Mammary epithelial cell (primary cell): ENCODE measurements at regions of chr5 and their contacts with region 1.

Region 1: GRCh38 chr5:129767906-129768380 is 20.0 kb downstream of the MINAR2 start:
- DNase-seq: peak; percentile 84
- H3K4me3 ChIP-seq: no peak overlapping the region
- H3K27ac ChIP-seq: no peak overlapping the region
- H3K4me1 ChIP-seq: no peaks in the 10 kb centered on the region
- H3K27me3 ChIP-seq: no peaks in the 10 kb centered on the region
- CTCF ChIP-seq: peak; percentile 96 to 99

Region 2: DNA sequence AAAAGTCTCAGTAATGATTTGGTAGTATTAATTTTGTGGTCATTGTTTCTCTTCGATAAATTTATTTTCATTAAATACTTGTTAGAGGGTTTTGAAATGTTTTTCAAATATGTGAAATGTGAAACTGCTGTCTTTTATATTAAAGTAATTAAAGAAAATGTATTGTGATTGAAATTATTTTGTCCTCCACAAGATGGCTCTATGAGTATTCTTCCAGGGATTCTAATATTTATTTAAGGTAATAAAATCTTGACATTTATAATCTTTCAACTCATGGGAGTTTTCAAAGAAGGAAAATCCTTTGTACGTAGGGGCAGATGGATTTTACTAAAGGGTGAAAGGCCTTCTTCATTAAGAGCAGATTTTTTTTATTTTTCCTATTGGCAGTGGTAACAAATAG is 654.1 kb before region 1 on chr5:
- CTCF ChIA-PET with region 1: no interaction called
- dilution Hi-C with region 1: no loop called
- in situ Hi-C with region 1: no loop called
- intact Hi-C with region 1: loop called (anchors 2 kb)
- DNase-seq: no peak
- H3K4me3 ChIP-seq: no peak overlapping the region
- H3K27ac ChIP-seq: no peak overlapping the region
- H3K4me1 ChIP-seq: peaks cover 6% of the 10 kb centered on the region
- H3K27me3 ChIP-seq: no peaks in the 10 kb centered on the region
- CTCF ChIP-seq: no peak

Region 3: DNA sequence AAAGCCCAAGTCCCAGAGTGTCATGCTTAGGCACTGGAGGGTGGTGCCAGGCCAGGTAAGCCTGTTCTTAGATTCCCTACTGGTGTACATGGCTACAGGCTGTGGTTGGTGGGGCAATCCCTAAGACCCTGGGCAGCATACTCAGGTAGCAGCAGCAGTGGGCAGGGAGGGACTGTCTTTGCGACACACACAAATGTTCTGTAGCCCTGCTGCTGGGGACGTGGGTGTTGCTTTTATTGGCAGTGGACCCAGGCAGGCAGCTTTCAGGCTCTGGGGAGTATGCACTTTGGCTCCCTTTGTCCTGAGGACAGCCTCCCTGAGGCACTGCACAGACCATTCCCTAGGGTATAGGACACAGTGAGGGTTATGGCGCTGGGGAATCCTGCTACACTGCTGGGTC is 445.0 kb before region 1 on chr5:
- CTCF ChIA-PET with region 1: no interaction called
- dilution Hi-C with region 1: no loop called
- in situ Hi-C with region 1: no loop called
- intact Hi-C with region 1: no loop called
- DNase-seq: no peak
- H3K4me3 ChIP-seq: no peak overlapping the region
- H3K27ac ChIP-seq: no peak overlapping the region
- H3K4me1 ChIP-seq: no peaks in the 10 kb centered on the region
- H3K27me3 ChIP-seq: no peaks in the 10 kb centered on the region
- CTCF ChIP-seq: no peak

Region 4: DNA sequence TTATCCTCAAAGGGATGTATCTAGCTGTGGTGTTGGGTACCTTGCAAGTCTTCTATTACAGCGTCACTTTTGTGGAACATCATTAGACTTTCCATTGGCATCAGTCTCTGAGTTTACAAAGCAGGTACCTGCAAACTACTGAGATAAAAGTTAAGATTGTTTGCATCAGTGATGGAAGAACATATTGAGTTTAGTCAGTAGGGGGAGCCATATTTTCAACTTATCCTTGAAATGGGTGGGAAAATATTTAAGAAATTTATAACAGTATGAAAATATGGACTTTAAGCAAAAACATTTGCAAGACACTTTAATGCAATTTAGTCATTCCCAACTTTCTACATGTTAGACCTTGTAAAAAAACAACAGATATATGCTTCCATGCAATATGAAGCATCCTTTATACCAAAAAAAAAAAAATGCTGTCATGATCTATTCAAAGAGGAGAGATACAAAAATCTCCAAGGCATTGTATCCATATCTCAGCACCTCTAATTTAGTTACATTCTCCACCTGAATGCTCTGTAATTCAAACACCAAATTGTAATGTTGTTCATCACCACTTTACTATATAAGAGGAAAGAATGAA is 406.4 kb before region 1 on chr5:
- CTCF ChIA-PET with region 1: no interaction called
- dilution Hi-C with region 1: no loop called
- in situ Hi-C with region 1: no loop called
- intact Hi-C with region 1: loop called (anchors 1 kb)
- DNase-seq: no peak
- H3K4me3 ChIP-seq: no peak overlapping the region
- H3K27ac ChIP-seq: no peak overlapping the region
- H3K4me1 ChIP-seq: peaks cover 10% of the 10 kb centered on the region
- H3K27me3 ChIP-seq: no peaks in the 10 kb centered on the region
- CTCF ChIP-seq: peak; percentile 53 to 58

Region 5: DNA sequence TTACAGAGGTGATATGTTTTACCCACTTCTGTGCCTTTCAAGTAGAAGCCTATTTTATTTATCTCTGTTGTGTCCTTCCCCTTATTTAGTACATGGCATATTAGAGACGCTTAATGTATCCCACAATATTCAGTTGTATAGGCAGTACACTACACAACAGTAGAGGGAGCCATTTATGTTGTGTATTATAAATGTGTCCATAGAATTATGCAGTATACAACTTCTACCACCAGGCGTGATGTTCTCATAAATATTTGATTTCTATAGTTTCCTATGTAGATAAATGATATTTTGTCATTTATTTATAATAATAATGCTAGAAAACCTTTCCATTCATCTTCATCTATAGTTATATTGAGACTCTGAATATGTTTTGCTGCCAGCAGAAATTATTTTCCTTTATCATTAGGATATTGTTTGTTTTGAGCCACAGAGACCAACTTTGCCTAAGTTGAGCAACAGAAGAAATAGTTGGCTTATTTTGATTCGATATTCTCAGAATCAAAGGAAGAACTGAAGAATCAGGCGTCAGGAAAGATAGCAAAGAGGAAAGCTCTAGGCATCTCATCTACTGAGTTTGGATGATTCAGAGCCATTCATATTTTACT is 226.2 kb before region 1 on chr5:
- CTCF ChIA-PET with region 1: no interaction called
- dilution Hi-C with region 1: no loop called
- in situ Hi-C with region 1: no loop called
- intact Hi-C with region 1: loop called (anchors 1 kb)
- DNase-seq: peak; percentile 23
- H3K4me3 ChIP-seq: no peak overlapping the region
- H3K27ac ChIP-seq: no peak overlapping the region
- H3K4me1 ChIP-seq: no peaks in the 10 kb centered on the region
- H3K27me3 ChIP-seq: no peaks in the 10 kb centered on the region
- CTCF ChIP-seq: peak; percentile 53 to 77

Region 6: GRCh38 chr5:129593525-129593924 is 174.4 kb before region 1 on chr5:
- CTCF ChIA-PET with region 1: no interaction called
- dilution Hi-C with region 1: no loop called
- in situ Hi-C with region 1: no loop called
- intact Hi-C with region 1: no loop called
- DNase-seq: no peak
- H3K4me3 ChIP-seq: no peak overlapping the region
- H3K27ac ChIP-seq: no peak overlapping the region
- H3K4me1 ChIP-seq: no peaks in the 10 kb centered on the region
- H3K27me3 ChIP-seq: no peaks in the 10 kb centered on the region
- CTCF ChIP-seq: no peak

Region 7: GRCh38 chr5:130141659-130142320 is 373.8 kb after region 1 on chr5:
- CTCF ChIA-PET with region 1: no interaction called
- dilution Hi-C with region 1: no loop called
- in situ Hi-C with region 1: no loop called
- intact Hi-C with region 1: loop called (anchors 1 kb)
- DNase-seq: peak; percentile 60
- H3K4me3 ChIP-seq: no peak overlapping the region
- H3K27ac ChIP-seq: no peak overlapping the region
- H3K4me1 ChIP-seq: peaks cover 6% of the 10 kb centered on the region
- H3K27me3 ChIP-seq: no peaks in the 10 kb centered on the region
- CTCF ChIP-seq: peak; percentile 67 to 87